CD4-positive, alpha-beta memory T cell (primary cell): ENCODE measurements at regions of chr12 and their contacts with region 1.

Region 1: DNA sequence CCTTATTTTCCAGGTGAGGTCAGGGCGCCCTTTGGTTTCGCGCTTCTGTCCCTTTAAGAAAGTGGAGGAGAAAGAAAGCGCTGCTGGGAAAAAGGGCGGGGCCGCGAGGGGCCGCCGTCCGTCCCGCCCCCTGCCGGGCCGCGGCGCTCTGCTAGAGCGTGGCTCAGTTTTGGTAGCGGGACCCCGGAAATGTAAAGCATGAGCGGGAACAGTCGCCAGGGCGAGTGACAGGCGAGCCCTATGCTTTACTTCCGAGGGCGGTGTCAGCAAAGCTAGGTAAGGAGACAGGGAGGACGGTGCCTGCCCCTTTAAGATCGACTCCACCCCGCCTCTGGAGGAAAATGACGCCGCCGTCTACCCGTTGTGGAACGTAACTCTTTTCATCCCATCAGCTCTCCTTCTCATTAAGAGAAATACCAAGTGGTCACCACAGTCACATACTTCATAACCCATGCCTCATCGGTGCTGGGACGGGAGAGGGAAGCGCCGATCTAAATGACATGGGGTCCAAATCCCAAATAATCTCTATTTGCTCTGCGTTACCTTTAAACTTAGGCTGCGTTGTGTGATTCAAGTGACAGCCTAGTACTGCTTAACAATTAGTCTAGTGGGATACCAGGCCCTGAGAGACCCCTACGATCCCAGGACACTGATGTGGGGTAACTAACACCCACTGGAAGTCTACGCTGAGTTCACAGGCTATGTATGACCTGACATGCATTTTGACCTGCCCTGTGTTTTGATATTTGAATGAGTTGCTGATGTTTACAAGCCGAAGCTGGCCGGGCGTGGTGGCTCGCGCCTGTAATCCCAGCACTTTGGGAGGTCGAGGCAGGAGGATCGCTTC is at the start of gene ETFBKMT:
- DNase-seq: peak; percentile 91 to 97 (median 94)
- H3K4me3 ChIP-seq: peak within 1 kb of the TSS; percentile 86 to 89
- H3K4me3 Mint-ChIP-seq: peak within 1 kb of the TSS; percentile 92 to 99 (median 94)
- H3K27ac ChIP-seq: peak within 1 kb of the TSS; percentile 86
- H3K27ac Mint-ChIP-seq: peak within 1 kb of the TSS; percentile 91 to 99 (median 98)
- H3K4me1 ChIP-seq: peaks cover 17% of the 10 kb centered on the region
- H3K4me1 Mint-ChIP-seq: peaks cover 8 to 21% (median 14%) of the 10 kb centered on the region in 4 donors
- H3K27me3 ChIP-seq: no peaks in the 10 kb centered on the region
- H3K27me3 Mint-ChIP-seq: no peaks in the 10 kb centered on the region
- total RNA-seq, gene ETFBKMT: 1.5 to 1.8 TPM

Region 2: GRCh38 chr12:31558521-31558920 is 100.8 kb before region 1 on chr12:
- CTCF ChIA-PET with region 1: no interaction called
- POLR2A ChIA-PET with region 1: no interaction called
- intact Hi-C with region 1: no loop called
- DNase-seq: no peak
- H3K4me3 ChIP-seq: no peak overlapping the region
- H3K4me3 Mint-ChIP-seq: no peak overlapping the region
- H3K27ac ChIP-seq: no peak overlapping the region
- H3K27ac Mint-ChIP-seq: no peak overlapping the region
- H3K4me1 ChIP-seq: no peaks in the 10 kb centered on the region
- H3K4me1 Mint-ChIP-seq: no peaks in the 10 kb centered on the region
- H3K27me3 ChIP-seq: no peaks in the 10 kb centered on the region
- H3K27me3 Mint-ChIP-seq: peaks cover 17 to 18% of the 10 kb centered on the region in 2 donors

Region 3: DNA sequence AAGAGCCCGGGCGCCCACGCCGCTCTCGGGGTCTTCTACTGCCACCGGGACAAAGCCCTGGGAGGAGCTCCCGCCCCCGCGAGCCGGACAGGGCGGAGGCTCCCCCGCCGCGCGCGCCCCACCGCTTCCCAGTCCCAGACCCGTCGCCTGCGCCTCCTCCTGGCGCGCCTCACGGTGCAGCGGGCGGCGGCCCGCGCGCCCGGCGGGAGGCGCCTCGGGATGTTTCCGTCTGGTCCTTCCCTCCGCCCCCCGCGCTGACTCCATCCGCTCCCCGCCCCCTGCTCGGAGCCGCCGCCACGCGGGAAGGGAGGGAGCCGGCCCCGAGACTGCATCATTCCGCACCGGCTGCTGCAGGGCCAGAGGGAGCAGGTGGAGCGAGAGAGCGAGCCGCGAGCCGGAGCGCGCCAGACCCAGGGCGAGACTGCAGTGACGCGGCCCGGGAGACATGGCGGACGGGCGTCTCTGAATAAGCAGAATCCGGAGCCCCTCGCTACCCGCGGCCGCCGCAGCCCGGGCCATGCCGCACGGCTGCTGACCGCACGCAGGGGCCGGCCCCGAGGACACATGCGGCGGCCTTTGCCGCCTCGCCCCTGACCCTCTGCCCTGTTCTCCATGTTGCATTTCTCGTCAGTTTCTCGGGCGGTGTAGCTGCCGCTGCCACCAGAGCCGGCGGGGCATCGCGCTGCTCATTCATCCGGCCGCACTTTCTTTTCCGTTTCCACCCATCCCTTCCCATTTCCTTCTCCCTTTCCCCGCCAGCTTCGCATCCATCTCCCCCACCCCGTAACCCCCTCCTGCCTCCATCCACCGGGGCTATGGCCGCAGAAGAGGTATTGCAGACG is 447.4 kb after region 1 on chr12 and contains the start of gene BICD1:
- CTCF ChIA-PET with region 1: no interaction called
- POLR2A ChIA-PET with region 1: interaction called, 3 read pairs
- intact Hi-C with region 1: loop called (anchors 2 kb)
- DNase-seq: peak; percentile 62 to 70 (median 66)
- H3K4me3 ChIP-seq: peak within 1 kb of the TSS; percentile 84 to 93
- H3K4me3 Mint-ChIP-seq: peak within 1 kb of the TSS; percentile 91 to 98 (median 98)
- H3K27ac ChIP-seq: peak within 1 kb of the TSS; percentile 57
- H3K27ac Mint-ChIP-seq: peak within 1 kb of the TSS; percentile 75 to 94 (median 91)
- H3K4me1 ChIP-seq: peaks cover 33% of the 10 kb centered on the region
- H3K4me1 Mint-ChIP-seq: peaks cover 25 to 35% (median 29%) of the 10 kb centered on the region in 4 donors
- H3K27me3 ChIP-seq: no peaks in the 10 kb centered on the region
- H3K27me3 Mint-ChIP-seq: no peaks in the 10 kb centered on the region
- total RNA-seq, gene BICD1: 16.1 to 20.3 TPM

Region 4: DNA sequence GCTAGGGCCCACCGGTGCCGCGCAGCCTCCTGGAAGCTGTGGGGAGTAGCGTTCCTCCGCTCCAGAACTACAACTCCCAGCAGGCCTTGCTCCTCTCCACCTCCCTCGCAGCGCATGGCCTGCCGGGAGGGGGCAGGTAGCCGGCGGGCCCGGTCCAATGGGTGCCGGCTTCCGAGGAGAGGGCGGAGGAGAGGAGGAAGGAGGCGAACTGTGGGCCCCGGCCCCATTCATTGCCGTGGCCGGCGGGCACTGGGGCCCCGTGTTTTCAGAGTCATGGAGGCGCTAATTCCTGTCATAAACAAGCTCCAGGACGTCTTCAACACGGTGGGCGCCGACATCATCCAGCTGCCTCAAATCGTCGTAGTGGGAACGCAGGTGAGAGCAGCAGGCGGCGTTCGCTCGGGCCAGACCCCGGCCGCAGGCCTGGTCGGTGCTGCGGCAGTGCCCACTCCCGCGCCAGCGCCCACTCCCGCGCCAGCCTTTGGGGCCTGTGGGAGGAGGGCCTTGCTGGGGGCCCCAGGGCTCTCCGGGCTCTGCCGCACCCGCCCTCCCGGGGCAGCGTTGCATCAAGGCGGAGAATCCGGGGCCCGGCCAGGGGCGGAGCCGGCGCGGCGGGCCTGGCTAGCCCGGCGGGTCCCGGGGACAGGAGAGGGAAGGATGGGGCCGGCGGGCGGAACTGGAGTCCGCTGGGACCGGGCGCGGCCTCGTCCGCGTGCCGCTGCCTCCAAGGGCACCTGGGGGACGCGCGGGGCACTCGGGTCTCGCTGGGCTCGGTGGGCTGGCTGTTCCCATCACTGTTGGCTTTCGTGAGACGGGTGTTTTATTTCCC is 1020.0 kb after region 1 on chr12 and contains the start of gene DNM1L:
- CTCF ChIA-PET with region 1: no interaction called
- POLR2A ChIA-PET with region 1: interaction called, 3 read pairs
- intact Hi-C with region 1: loop called (anchors 1 kb)
- DNase-seq: peak; percentile 91 to 95 (median 93)
- H3K4me3 ChIP-seq: peak within 1 kb of the TSS; percentile 65 to 69
- H3K4me3 Mint-ChIP-seq: peak within 1 kb of the TSS; percentile 89 to 97 (median 94)
- H3K27ac ChIP-seq: peak within 1 kb of the TSS; percentile 87
- H3K27ac Mint-ChIP-seq: peak within 1 kb of the TSS; percentile 80 to 97 (median 94)
- H3K4me1 ChIP-seq: peaks cover 18% of the 10 kb centered on the region
- H3K4me1 Mint-ChIP-seq: peaks cover 14 to 37% (median 27%) of the 10 kb centered on the region in 4 donors
- H3K27me3 ChIP-seq: no peaks in the 10 kb centered on the region
- H3K27me3 Mint-ChIP-seq: no peaks in the 10 kb centered on the region
- total RNA-seq, gene DNM1L: 42.7 to 50.1 TPM